WTC11 (cell line): ENCODE measurements at regions of chr11 and their contacts with region 1.

Region 1: DNA sequence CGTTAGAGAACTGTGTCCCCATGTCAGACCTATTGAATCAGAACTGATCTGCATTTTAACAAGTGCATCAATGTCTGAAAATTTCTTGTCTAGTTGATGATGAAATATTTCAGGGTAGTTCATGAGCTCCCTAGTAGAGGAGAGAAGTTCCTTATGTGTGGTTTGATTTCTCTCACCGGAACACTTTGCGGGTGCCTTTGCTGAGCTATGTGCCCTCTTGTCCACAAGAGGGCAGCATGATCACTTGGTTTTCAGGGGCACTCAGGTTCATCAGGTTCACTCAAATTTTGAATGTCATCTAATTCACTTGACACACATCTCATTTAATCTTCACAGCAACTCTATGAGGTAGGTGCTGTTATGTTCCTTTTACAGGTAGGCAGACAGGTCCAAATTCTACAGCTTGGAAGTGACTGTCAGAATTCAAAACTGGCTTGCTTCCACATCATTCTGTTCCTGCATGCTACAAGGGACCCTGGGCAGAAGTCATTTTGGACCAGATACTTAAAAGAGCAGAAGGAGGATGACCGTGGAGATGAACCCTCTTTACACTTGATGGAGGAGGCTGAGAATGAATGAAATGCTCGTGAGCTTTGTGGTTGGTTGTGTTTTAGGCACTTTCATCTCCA is 55.6 kb downstream of the P4HA3 start:
- DNase-seq: peak; percentile 50
- ATAC-seq: peak; percentile 63
- H3K4me3 Mint-ChIP-seq: no peak overlapping the region
- H3K27ac Mint-ChIP-seq: no peak overlapping the region
- H3K4me1 Mint-ChIP-seq: no peaks in the 10 kb centered on the region
- H3K27me3 Mint-ChIP-seq: peaks cover 7% of the 10 kb centered on the region
- CTCF ChIP-seq: peak; percentile 84

Region 2: GRCh38 chr11:74321487-74322188 is 65.8 kb after region 1 on chr11:
- CTCF ChIA-PET with region 1: interaction called, 27 read pairs
- POLR2A ChIA-PET with region 1: no interaction called
- DNase-seq: peak; percentile 39
- ATAC-seq: 0 out of 2 replicates have a peak, but pooled peaks have one; percentile 58
- H3K4me3 Mint-ChIP-seq: no peak overlapping the region
- H3K27ac Mint-ChIP-seq: no peak overlapping the region
- H3K4me1 Mint-ChIP-seq: peaks cover 5% of the 10 kb centered on the region; the same call in 1 of the 2 replicates
- H3K27me3 Mint-ChIP-seq: peaks cover 8% of the 10 kb centered on the region
- CTCF ChIP-seq: peak; percentile 61

Region 3: GRCh38 chr11:74398244-74399159 is 142.6 kb after region 1 on chr11 and contains the start of gene PGM2L1:
- CTCF ChIA-PET with region 1: interaction called, 10 read pairs
- POLR2A ChIA-PET with region 1: no interaction called
- DNase-seq: peak; percentile 91
- ATAC-seq: peak; percentile 89
- H3K4me3 Mint-ChIP-seq: peak within 1 kb of the TSS; percentile 99
- H3K27ac Mint-ChIP-seq: peak within 1 kb of the TSS; percentile 97
- H3K4me1 Mint-ChIP-seq: peaks cover 15% of the 10 kb centered on the region
- H3K27me3 Mint-ChIP-seq: no peaks in the 10 kb centered on the region
- CTCF ChIP-seq: no peak
- total RNA-seq, gene PGM2L1: 23.1 to 34.1 TPM (median 24.8 TPM) in 3 replicates

Region 4: GRCh38 chr11:74492974-74493790 is 237.3 kb after region 1 on chr11 and contains the start of gene LIPT2:
- CTCF ChIA-PET with region 1: no interaction called
- POLR2A ChIA-PET with region 1: no interaction called
- DNase-seq: peak; percentile 97
- ATAC-seq: peak; percentile 94
- H3K4me3 Mint-ChIP-seq: peak within 1 kb of the TSS; percentile 72
- H3K27ac Mint-ChIP-seq: peak within 1 kb of the TSS; percentile 97
- H3K4me1 Mint-ChIP-seq: peaks cover 20% of the 10 kb centered on the region
- H3K27me3 Mint-ChIP-seq: no peaks in the 10 kb centered on the region; the same call in 1 of the 2 replicates
- CTCF ChIP-seq: no peak
- total RNA-seq, gene LIPT2: 9.3 to 9.6 TPM (median 9.5 TPM) in 3 replicates